ENCODE measurements at regions of chr15 and their contacts with region 1.

Region 1: GRCh38 chr15:70584838-70585706 is 178.3 kb downstream of the UACA start:
- DNase-seq: peak; percentile 52 to 77
- ATAC-seq: peak; percentile 77 to 94
- H3K4me3 ChIP-seq: peak overlapping the region; percentile 41
- H3K27ac ChIP-seq: peak overlapping the region; percentile 71 to 83
- H3K4me1 ChIP-seq: peaks cover 23% of the 10 kb centered on the region
- CTCF ChIP-seq: peak; percentile 89
- EP300 ChIP-seq: no peak
- POLR2A ChIP-seq: no peak
- RAD21 ChIP-seq: peak; percentile 77 to 96

Region 2: DNA sequence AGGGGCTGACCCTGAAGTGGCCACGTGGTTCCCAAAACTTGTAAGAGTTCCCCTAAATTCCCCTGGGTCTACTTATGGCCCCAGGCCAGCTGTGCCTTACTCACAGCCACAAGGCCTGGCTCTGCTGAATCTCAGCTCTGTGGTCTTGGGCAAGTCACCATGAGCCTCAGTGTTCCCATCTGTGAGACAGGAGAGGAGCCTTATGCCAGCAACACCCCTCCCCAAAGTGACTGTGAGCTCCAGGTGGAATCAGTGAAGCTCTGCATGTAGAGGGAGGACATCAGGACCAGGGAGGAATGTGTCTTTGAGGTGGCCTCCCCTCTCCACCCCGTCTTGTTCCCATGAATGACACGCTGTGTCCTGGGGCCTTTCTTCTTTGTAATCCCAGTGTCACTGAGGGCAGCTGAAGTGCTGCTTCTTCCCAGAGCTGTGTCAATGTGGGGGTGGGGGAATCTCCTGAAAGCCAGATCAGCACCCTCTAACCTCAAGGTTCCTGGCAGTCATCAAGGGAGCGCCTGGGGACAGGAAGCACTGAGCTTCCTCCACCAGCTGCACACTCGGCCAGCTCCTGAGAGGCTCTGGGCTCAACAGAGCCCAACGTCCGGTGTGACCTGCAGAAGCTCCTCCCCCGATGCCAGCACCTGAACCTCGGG is 80.6 kb before region 1 on chr15:
- CTCF ChIA-PET with region 1: interaction called, 57 read pairs
- POLR2A ChIA-PET with region 1: interaction called, 3 read pairs
- DNase-seq: peak in 1 of 2 experiments; percentile 73
- ATAC-seq: no peak
- H3K4me3 ChIP-seq: no peak overlapping the region
- H3K27ac ChIP-seq: peak overlapping the region; percentile 93 to 96
- H3K4me1 ChIP-seq: peaks cover 62% of the 10 kb centered on the region
- CTCF ChIP-seq: no peak
- EP300 ChIP-seq: no peak
- POLR2A ChIP-seq: no peak
- RAD21 ChIP-seq: no peak

Region 3: GRCh38 chr15:70557506-70558258 is 27.4 kb before region 1 on chr15:
- CTCF ChIA-PET with region 1: interaction called, 20 read pairs
- POLR2A ChIA-PET with region 1: no interaction called
- DNase-seq: no peak
- ATAC-seq: peak; percentile 44 to 64; a peak in 5 of 6 replicates
- H3K4me3 ChIP-seq: no peak overlapping the region
- H3K27ac ChIP-seq: no peak overlapping the region
- H3K4me1 ChIP-seq: no peaks in the 10 kb centered on the region
- CTCF ChIP-seq: no peak
- EP300 ChIP-seq: no peak
- POLR2A ChIP-seq: no peak
- RAD21 ChIP-seq: no peak

Region 4: GRCh38 chr15:70569091-70569621 is 15.9 kb before region 1 on chr15:
- CTCF ChIA-PET with region 1: interaction called, 66 read pairs
- POLR2A ChIA-PET with region 1: interaction called, 4 read pairs
- DNase-seq: peak; percentile 67 to 77
- ATAC-seq: peak; percentile 92
- H3K4me3 ChIP-seq: no peak overlapping the region
- H3K27ac ChIP-seq: peak overlapping the region; percentile 17 to 60; a peak in 4 of 6 replicates
- H3K4me1 ChIP-seq: peaks cover 17% of the 10 kb centered on the region
- CTCF ChIP-seq: peak; percentile 67
- EP300 ChIP-seq: no peak
- POLR2A ChIP-seq: no peak
- RAD21 ChIP-seq: peak; percentile 81 to 89

Region 5: GRCh38 chr15:70596354-70597055 is 11.4 kb after region 1 on chr15:
- CTCF ChIA-PET with region 1: interaction called, 24 read pairs
- POLR2A ChIA-PET with region 1: no interaction called
- DNase-seq: peak; percentile 75 to 82
- ATAC-seq: peak; percentile 95
- H3K4me3 ChIP-seq: no peak overlapping the region
- H3K27ac ChIP-seq: peak overlapping the region; percentile 60 to 69
- H3K4me1 ChIP-seq: peaks cover 20% of the 10 kb centered on the region
- CTCF ChIP-seq: no peak
- EP300 ChIP-seq: no peak
- POLR2A ChIP-seq: no peak
- RAD21 ChIP-seq: 0 out of 5 replicates have a peak, but pooled peaks of 1 of the 2 experiments have one; percentile 12

Measured in A549 (cell line).